ENCODE measurements at regions of chr3 and their contacts with region 1.

Region 1: GRCh38 chr3:182740710-182741109 is 52.6 kb upstream of the ATP11B start:
- DNase-seq: peak; percentile 83 to 96
- H3K4me3 ChIP-seq: peak overlapping the region; percentile 47
- H3K27ac ChIP-seq: peak overlapping the region; percentile 98
- H3K4me1 ChIP-seq: peaks cover 51% of the 10 kb centered on the region
- H3K27me3 ChIP-seq: no peaks in the 10 kb centered on the region
- CTCF ChIP-seq: no peak

Region 2: GRCh38 chr3:182668974-182669373 is 71.7 kb before region 1 on chr3:
- CTCF ChIA-PET with region 1: no interaction called
- POLR2A ChIA-PET with region 1: no interaction called
- intact Hi-C with region 1: no loop called
- DNase-seq: no peak
- H3K4me3 ChIP-seq: no peak overlapping the region
- H3K27ac ChIP-seq: no peak overlapping the region
- H3K4me1 ChIP-seq: no peaks in the 10 kb centered on the region
- H3K27me3 ChIP-seq: no peaks in the 10 kb centered on the region
- CTCF ChIP-seq: no peak

Region 3: GRCh38 chr3:182755308-182755707 is 14.6 kb after region 1 on chr3:
- CTCF ChIA-PET with region 1: no interaction called
- POLR2A ChIA-PET with region 1: interaction called, 7 read pairs
- intact Hi-C with region 1: loop called (anchors 1 kb)
- DNase-seq: peak in 1 of 2 experiments; percentile 48
- H3K4me3 ChIP-seq: no peak overlapping the region
- H3K27ac ChIP-seq: no peak overlapping the region; the same call in 1 of the 2 replicates
- H3K4me1 ChIP-seq: peaks cover 25% of the 10 kb centered on the region
- H3K27me3 ChIP-seq: no peaks in the 10 kb centered on the region
- CTCF ChIP-seq: no peak

Region 4: GRCh38 chr3:182843478-182843877 is 102.8 kb after region 1 on chr3:
- CTCF ChIA-PET with region 1: no interaction called
- POLR2A ChIA-PET with region 1: no interaction called
- intact Hi-C with region 1: no loop called
- DNase-seq: no peak
- H3K4me3 ChIP-seq: no peak overlapping the region
- H3K27ac ChIP-seq: no peak overlapping the region
- H3K4me1 ChIP-seq: no peaks in the 10 kb centered on the region
- H3K27me3 ChIP-seq: no peaks in the 10 kb centered on the region
- CTCF ChIP-seq: no peak

Region 5: DNA sequence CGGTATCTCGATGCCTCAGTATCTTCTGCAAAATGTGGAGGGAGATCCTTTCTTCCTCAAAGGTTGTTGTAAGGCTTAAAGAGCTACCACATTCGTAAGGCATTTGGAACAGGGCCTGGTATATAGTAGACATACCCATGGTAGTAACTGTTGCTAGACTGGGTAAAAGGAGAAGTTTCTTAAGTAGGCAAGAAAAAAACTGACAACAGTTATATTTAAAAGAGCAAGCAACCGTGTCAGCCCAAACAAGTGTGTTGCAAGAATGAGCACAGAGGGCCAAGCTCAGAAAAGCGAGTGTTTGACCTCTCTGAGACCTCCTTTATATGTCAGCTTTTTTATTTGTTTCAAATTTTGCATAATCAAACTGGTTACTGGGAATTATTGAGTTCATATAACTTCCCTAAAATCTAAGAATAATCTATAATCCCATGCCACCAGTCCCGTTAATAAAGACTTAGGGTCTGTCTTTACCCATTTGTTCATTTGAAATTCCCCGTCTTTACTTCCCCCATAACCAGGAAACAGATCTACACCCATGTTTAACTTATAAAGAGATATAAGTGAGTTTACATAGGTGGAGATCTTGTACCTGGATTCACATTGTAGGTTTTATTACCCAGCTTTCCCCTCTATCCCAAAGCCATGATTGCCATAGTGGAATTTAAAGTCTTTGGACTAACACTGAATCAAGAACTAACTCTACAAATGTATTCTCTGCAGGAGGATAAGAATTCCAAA is 519.6 kb after region 1 on chr3:
- CTCF ChIA-PET with region 1: no interaction called
- POLR2A ChIA-PET with region 1: interaction called, 11 read pairs
- intact Hi-C with region 1: no loop called
- DNase-seq: no peak
- H3K4me3 ChIP-seq: no peak overlapping the region
- H3K27ac ChIP-seq: 0 out of 2 replicates have a peak overlapping the region, but pooled peaks have one; percentile 3
- H3K4me1 ChIP-seq: peaks cover 55% of the 10 kb centered on the region
- H3K27me3 ChIP-seq: no peaks in the 10 kb centered on the region
- CTCF ChIP-seq: no peak

Region 6: DNA sequence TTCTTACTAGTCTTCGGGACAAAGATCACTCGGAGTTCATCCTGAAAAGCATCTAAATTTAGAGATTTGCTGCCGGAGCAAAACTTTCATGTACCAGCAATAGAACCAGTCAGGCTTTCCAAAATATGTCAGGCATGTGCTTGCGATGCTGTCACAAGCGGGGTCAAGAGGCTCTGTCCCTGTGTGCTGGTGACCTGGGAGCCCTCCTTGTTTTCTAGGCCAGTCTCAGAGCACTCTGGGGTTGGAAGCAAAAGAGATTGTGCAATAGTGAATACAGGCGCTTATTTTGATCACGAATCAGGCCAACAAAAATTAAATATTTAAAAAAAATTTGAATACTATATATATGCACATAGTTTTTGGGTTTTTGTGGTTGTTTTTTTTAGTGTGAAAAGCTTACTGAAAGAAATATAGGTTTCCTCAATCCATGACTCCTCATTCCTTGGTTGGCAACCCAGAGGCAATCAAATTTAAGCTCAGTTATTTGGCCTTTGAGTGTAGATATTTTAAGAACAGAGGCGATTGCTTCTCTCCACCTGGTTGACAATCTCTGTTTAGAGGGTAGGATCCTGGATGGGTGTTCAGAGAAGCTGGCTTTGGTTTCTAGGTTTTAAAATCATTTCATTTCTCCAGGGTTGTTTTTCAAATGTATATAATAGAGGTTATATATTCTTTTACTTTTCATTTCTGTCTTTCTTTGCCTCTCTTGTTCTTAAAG is 886.3 kb after region 1 on chr3:
- CTCF ChIA-PET with region 1: no interaction called
- POLR2A ChIA-PET with region 1: no interaction called
- intact Hi-C with region 1: no loop called
- DNase-seq: peak in 1 of 2 experiments; percentile 27
- H3K4me3 ChIP-seq: no peak overlapping the region
- H3K27ac ChIP-seq: no peak overlapping the region
- H3K4me1 ChIP-seq: no peaks in the 10 kb centered on the region
- H3K27me3 ChIP-seq: no peaks in the 10 kb centered on the region
- CTCF ChIP-seq: no peak

Region 7: DNA sequence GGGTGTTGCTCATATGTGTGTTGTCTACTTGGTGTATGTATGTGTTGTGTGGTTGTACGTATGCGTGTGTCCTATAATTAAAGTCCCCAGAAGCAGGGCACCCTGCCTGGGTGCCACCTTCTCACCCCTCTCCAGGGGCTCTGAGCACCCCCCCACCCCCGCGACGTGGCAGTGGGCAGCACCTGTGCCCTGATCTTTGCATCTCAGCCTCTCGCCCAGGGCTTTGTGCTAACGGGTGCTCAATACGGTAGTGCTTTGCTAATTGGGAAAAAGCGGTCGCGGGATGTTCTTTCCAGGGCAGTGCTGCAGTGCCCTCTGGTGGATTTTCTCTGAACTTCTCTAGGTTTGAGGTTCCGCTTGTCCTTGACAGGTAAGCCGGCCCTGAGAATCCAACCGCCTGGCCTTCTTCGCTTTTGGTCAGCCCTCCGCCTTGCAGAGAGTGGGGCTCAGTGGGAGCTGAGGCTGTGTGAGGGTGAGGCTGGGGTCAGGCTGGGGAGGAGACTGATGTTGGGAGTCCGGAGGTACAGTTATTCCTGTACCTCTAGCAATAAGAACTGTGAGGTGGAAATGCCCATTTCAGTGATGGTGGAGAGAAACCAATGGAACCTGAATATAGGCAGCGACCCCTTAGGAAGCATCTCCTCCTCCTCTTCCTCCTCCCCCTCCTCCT is 1803.3 kb after region 1 on chr3:
- CTCF ChIA-PET with region 1: no interaction called
- POLR2A ChIA-PET with region 1: no interaction called
- intact Hi-C with region 1: no loop called
- DNase-seq: peak; percentile 83 to 89
- H3K4me3 ChIP-seq: no peak overlapping the region
- H3K27ac ChIP-seq: no peak overlapping the region
- H3K4me1 ChIP-seq: no peaks in the 10 kb centered on the region
- H3K27me3 ChIP-seq: peaks cover 50% of the 10 kb centered on the region
- CTCF ChIP-seq: peak; percentile 97